Breast epithelium (tissue), 4 donors: ENCODE measurements at regions of chr13 and their contacts with region 1.

Region 1: DNA sequence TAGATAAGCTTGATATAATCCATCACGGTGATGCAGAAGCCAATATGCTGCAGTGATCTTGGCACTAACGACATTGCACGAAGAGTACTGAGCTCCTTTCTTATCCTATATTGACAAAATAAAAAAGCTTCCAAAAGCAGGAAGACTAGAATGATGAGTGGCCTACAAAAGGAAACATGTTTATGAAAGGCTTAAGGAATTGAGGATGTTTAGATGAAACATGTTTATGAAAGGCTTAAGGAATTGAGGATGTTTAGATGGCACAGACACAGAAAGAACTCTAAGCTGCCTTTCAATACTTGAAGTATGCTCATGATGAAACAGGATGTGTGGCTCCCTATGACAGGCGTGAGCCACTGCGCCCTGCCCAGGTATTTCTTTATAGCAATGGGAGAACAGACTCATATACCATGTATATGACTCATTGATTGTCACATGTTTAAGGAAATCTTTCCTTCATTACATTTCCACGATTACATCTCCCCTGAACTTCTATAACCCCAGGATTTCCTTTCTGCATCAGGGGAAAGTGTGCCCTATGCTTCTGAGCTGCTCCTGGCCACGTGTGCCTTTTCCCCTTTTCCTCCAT is 690.8 kb upstream of the ARGLU1 start:
- DNase-seq: no peak
- H3K4me3 ChIP-seq: no peak overlapping the region
- H3K27ac ChIP-seq: no peak overlapping the region
- H3K4me1 ChIP-seq: no peaks in the 10 kb centered on the region
- H3K27me3 ChIP-seq: no peaks in the 10 kb centered on the region
- CTCF ChIP-seq: no peak
- POLR2A ChIP-seq: no peak

Region 2: DNA sequence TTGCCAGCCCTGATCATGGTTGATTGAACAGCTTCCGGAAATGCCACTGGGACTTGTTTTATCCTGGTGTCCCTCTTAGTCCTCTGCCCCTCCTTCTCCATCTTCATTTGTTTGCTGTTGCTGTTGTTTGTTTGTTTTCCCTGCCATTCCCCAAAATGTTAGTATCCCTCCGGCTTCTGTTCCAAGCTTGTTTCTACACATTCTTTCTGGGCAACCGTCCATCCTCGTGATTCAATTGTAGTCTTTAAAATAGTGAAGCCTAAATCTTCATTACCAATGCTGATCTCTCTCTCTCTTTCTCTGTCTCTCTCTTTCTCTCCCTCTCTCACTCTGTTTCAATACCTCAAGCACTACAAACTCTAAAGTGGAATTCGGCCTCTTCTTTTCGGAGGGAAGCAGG is 41.4 kb before region 1 on chr13:
- intact Hi-C with region 1: no loop called
- DNase-seq: no peak
- H3K4me3 ChIP-seq: no peak overlapping the region
- H3K27ac ChIP-seq: no peak overlapping the region
- H3K4me1 ChIP-seq: no peaks in the 10 kb centered on the region
- H3K27me3 ChIP-seq: no peaks in the 10 kb centered on the region
- CTCF ChIP-seq: no peak
- POLR2A ChIP-seq: no peak

Region 3: DNA sequence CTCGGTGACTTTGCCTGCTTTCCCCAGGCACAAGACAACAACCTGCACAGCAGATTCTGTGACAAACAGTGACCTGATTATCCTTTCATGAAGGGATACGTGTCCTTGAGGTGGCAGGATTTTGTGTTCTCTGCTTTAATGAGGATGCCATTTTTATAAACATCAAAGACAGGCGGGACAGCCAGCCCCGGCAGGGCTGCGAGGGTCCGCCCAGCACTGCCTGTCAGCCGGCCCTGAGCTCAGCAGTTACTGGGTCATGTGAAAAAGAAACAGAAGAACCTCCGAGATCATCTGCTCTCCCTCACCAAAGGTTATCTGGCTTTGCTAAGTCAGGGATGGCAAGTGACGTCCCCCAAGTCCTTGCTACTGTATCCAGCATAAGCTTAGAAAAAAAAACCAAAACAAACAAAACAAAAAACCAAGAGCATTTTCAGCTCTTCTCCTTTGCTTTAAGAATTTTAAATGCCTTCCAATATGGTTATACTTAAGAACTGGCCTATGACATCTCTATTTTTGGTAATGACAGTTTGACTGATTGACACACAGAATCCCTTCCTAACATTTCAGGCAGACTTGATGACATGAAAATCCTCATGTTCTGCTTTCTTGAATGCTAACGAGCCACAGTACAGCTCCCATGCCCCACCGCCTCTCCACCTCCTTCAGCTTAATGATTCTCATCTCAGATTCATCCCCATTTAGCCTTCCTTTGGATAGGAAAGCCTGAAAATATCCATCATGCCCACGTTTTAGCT is 24.2 kb before region 1 on chr13:
- intact Hi-C with region 1: loop called (anchors 2 kb)
- DNase-seq: no peak
- H3K4me3 ChIP-seq: no peak overlapping the region
- H3K27ac ChIP-seq: no peak overlapping the region
- H3K4me1 ChIP-seq: no peaks in the 10 kb centered on the region
- H3K27me3 ChIP-seq: no peaks in the 10 kb centered on the region
- CTCF ChIP-seq: no peak
- POLR2A ChIP-seq: no peak